ENCODE measurements at regions of chr17 and their contacts with region 1.

Region 1: GRCh38 chr17:47229535-47230443 is 20.6 kb downstream of the MYL4 start:
- DNase-seq: peak; percentile 80 to 98
- H3K4me3 ChIP-seq: peak overlapping the region; percentile 36; the same call in 1 of the 2 replicates
- H3K27ac ChIP-seq: peak overlapping the region; percentile 90
- H3K4me1 ChIP-seq: peaks cover 43% of the 10 kb centered on the region
- H3K27me3 ChIP-seq: no peaks in the 10 kb centered on the region
- CTCF ChIP-seq: peak; percentile 98

Region 2: GRCh38 chr17:47279062-47279736 is 49.4 kb after region 1 on chr17:
- CTCF ChIA-PET with region 1: no interaction called
- POLR2A ChIA-PET with region 1: no interaction called
- intact Hi-C with region 1: loop called (anchors 1 kb)
- DNase-seq: peak; percentile 75 to 99
- H3K4me3 ChIP-seq: no peak overlapping the region
- H3K27ac ChIP-seq: peak overlapping the region; percentile 87
- H3K4me1 ChIP-seq: peaks cover 70% of the 10 kb centered on the region
- H3K27me3 ChIP-seq: no peaks in the 10 kb centered on the region
- CTCF ChIP-seq: no peak

Region 3: GRCh38 chr17:47315451-47316266 is 85.9 kb after region 1 on chr17:
- CTCF ChIA-PET with region 1: interaction called, 4 read pairs
- POLR2A ChIA-PET with region 1: no interaction called
- intact Hi-C with region 1: loop called (anchors 1 kb)
- DNase-seq: peak in 1 of 2 experiments; percentile 87
- H3K4me3 ChIP-seq: no peak overlapping the region
- H3K27ac ChIP-seq: peak overlapping the region; percentile 73
- H3K4me1 ChIP-seq: peaks cover 39% of the 10 kb centered on the region
- H3K27me3 ChIP-seq: no peaks in the 10 kb centered on the region
- CTCF ChIP-seq: peak; percentile 97

Measured in PC-9 (cell line).